ENCODE measurements at regions of chr11 and their contacts with region 1.

Region 1: DNA sequence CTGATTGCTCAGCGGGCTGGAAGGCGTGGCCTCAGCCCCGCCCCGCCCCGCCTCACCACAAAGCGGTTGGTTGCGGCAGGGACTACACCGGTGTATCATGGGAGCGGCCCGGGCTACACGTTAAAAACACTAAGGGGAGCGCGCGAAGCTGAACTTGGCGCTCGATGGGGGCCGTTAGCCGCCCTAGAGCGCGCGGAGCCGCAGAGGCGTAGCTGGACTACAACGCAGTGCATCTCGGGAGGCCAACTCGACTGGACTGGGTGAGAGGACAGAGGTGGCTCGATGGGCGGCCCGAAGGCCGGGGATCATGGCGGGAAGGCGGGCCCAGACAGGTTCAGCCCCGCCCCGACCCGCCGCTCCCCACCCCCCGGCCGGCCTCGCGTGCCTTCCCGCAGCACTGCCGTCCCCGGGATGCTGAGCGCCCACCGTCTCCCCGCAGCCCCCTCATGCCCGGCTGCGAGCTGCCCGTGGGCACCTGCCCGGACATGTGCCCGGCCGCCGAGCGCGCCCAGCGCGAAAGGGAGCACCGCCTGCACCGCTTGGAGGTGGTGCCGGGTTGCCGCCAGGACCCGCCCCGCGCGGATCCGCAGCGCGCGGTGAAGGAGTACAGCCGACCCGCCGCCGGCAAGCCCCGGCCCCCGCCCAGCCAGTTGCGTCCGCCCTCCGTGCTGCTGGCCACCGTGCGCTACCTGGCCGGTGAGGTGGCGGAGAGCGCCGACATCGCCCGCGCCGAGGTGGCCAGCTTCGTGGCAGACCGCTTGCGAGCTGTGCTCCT is at the start of gene SAC3D1:
- DNase-seq: peak; percentile 94
- H3K4me3 Mint-ChIP-seq: peak within 1 kb of the TSS; percentile 87
- H3K27ac Mint-ChIP-seq: peak within 1 kb of the TSS; percentile 97
- H3K4me1 Mint-ChIP-seq: peaks cover 7% of the 10 kb centered on the region
- H3K27me3 Mint-ChIP-seq: no peaks in the 10 kb centered on the region
- total RNA-seq, gene SAC3D1: 14.2 to 14.7 TPM

Region 2: GRCh38 chr11:65083834-65084597 is 43.0 kb after region 1 on chr11 and contains the starts of genes CDCA5 and ZFPL1:
- CTCF ChIA-PET with region 1: no interaction called
- POLR2A ChIA-PET with region 1: interaction called, 16 read pairs
- intact Hi-C with region 1: loop called (anchors 1 kb)
- DNase-seq: peak; percentile 97
- H3K4me3 Mint-ChIP-seq: peak within 1 kb of the TSS; percentile 99
- H3K27ac Mint-ChIP-seq: peak within 1 kb of the TSS; percentile 96
- H3K4me1 Mint-ChIP-seq: peaks cover 36% of the 10 kb centered on the region
- H3K27me3 Mint-ChIP-seq: no peaks in the 10 kb centered on the region
- total RNA-seq, gene CDCA5: 111 to 112 TPM
- total RNA-seq, gene ZFPL1: 28.3 to 31.3 TPM